Sciatic nerve (tissue), 2 donors: ENCODE measurements at regions of chr10 and their contacts with region 1.

Region 1: DNA sequence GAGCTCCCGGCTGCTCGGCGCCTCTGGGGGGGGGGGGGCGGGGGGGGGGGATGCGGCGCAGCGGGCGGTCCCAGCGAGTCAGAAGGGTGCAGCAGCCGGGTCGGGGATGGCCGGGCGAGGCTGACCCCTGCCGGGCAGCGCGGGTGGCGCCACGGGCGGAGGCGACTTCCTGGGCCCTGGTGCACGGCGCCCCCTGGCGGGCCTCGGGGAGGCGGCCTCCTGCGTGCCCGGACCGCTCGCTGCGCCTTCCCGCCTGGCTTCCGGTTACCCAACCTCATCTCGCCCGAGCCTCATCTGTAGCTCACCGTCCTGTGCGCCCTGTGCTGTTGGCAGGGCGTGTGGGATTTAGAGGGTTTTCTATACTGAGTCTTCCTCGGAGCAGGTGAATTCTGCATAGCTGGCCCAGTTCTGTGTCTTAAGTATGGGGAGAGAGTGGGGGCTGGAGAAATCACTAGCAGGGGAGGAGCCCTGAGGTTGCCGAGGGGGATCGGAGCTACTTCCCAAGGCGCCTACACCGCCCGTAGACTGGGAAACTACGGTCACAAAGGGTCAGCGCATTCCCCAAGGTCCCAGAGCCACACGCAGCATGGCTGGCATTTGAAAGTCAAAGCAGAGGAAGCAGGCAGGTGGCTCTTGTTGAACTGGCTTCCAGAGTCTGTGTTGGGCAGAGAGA is 28.3 kb upstream of the WDFY4 start:
- DNase-seq: peak; percentile 94
- ATAC-seq: peak; percentile 90

Region 2: DNA sequence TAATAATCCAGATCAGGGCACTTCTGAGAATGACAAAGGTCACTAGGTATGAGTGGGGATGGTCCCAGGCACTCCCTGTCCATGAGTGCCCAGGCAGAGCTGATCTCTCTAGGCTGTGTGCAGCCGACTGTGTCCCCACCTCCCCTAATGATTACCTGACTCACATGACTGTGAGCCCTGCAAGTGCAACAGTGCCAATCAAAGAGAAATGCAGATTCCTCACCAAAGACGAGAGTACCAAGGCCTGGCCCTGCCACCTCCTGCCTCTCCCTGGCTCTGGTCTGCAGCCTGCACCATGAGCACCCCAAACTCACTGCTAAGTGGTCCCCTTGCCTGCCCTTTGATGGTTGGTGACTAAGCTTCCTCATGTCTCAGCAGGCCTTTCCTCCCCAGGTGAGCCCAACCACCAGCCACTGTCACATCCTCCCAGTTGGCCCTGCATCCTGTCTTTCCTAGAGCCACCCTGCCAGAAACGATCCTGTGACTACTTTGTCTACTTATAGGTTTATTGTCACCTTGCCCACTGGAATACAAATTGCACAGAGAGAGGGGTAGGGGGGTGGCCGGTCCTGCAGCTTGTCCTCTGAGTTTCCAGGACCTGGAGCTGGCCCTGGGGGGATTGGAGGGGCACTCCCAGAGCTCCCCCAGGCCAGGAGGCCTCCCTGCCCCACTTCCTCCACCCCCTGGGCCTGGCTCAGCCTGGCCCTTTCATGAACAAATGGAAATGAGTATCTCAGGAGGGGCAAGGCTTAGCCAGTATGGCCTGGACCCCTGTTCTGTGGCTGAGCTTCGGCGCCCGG is 1378.8 kb before region 1 on chr10:
- intact Hi-C with region 1: no loop called
- DNase-seq: no peak
- ATAC-seq: no peak

Region 3: DNA sequence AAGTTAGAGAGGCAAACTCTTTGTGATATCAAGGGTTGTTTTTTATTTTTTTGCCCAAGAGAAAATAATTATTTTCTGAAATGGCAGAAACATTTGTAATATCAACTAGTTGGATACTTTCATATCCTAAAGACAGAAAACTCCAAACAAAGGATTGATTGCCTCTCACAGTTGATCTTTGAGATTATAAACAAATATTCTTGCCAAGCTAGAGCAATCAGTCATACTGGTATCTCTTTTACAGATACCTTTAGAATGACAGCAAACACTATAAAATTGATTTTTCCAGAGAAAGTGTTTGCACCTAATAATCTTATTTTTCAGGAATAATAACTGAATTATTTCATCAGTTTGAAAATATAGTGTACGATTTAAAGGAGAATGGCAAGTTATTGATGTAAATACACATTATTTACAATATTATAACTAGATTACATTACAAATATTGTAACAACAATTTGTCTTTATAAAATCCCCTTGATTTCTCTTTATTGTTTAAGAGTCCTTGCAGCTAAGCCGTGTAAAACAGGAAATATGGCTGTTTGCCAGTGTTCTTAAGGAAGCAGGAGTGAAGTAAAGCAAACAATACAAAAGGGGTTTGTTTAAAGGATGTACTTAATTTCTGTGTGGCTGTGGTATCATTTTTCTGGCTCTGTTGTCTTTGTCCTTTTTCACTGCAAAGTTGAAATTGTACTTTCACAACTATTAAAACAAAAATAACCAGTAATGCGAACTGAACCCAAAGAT is 291.5 kb before region 1 on chr10:
- intact Hi-C with region 1: loop called (anchors 5 kb)
- DNase-seq: no peak
- ATAC-seq: no peak

Region 4: DNA sequence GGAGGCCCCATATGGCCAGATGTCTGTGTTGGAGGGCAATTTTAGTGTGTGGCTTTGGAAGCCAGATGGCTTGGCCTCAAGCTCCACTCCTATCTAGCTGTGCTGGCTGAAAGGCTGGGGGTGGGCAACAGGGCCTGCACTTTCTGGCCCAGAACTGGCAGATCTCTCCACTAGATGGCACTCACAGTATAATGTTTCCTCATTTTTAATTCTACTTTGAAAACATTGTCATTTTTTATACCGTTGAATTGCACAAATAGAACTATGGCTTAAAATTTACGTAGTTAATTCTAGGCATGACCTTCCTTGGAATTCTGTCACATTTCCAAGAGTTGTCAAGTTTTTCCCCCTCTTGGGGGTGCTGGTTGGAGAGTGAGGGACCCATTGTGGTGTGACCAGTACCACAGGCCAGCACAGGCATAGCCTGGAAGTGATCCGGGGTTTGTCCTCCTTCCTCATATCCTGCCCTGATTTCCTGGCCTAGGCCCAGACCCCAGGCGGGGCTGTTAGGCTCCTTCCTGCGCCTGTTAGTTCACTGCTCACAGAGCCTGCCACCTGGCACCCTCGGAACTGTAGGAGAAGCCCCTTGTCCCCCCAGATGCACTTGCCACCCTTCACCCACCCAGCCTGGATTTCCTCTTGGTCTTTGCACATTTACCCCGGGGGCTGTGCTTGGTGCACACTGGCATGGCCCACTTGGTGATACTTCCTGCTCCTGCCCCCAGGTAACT is 104.4 kb before region 1 on chr10:
- intact Hi-C with region 1: loop called (anchors 10 kb)
- DNase-seq: peak; percentile 57
- ATAC-seq: peak; percentile 66

Region 5: DNA sequence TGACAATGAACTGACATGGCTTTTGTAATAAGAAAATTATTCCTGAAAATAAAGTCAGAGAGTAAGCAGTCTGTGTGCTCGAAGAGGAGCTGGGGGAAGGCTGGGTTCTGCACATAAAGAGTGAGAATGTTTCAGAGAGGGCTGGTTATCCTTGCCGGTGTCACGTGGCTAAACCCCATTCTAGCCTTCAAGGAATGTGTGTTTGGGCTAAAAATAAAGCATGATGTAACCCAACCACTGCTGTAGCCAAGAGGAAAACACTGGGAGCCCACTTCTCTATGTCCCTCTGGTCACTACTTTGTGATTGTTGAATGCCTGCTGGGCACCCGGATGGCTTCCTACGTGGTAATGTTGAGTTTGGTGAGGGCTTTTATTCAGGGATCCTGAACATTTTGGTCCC is 51.8 kb after region 1 on chr10:
- intact Hi-C with region 1: no loop called
- DNase-seq: no peak
- ATAC-seq: peak; percentile 62

Region 6: GRCh38 chr10:49827297-49827696 is 1170.9 kb after region 1 on chr10:
- intact Hi-C with region 1: no loop called
- DNase-seq: no peak
- ATAC-seq: no peak